ENCODE measurements at regions of chr7 and their contacts with region 1.

Region 1: DNA sequence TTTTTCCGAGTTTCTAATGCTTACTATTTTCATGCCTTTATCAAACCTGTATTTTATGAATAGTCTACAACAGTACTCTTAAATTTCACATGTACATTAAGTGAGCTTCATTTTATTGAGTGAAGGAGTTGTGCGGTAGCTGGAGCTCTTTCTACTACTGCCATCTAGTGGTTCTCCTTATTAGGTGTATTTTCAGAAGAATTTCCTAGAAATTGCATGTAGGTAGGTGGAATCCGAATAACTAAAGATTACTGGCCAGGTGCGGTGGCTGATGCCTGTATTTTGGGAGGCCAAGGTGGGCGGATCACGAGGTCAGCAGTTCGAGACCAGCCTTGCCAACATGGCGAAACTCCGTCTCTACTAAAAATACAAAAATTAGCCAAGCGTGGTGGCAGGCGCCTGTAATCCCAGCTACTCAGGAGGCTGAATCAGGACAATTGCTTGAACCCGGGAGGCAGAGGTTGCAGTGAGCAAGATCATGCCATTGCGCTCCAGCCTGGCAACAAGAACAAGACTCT is 38.3 kb downstream of the LRRC72 start:
- DNase-seq: peak; percentile 52
- H3K4me3 ChIP-seq: no peak overlapping the region
- H3K27ac ChIP-seq: no peak overlapping the region
- H3K4me1 ChIP-seq: no peaks in the 10 kb centered on the region
- CTCF ChIP-seq: peak; percentile 87

Region 2: DNA sequence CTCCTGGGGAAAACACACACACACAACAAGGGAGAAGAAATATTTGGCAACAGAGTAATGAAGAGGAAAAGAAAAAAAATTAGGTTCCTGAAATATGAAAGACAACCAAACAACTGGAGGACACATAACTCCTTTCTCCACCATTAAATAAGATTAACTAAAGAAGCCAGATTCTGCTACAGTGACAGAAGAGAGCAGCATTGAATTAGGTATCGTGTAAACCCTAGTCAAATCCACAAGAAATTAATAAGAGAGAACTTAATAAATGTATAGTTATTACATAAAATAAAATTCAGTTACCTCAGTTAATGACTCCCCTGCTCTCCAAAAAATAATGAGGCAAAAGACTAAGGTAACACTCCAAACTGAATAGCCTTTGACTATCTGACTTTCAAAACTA is 450.3 kb before region 1 on chr7:
- CTCF ChIA-PET with region 1: no interaction called
- POLR2A ChIA-PET with region 1: no interaction called
- intact Hi-C with region 1: loop called (anchors 10 kb)
- DNase-seq: no peak
- H3K4me3 ChIP-seq: no peak overlapping the region
- H3K27ac ChIP-seq: no peak overlapping the region
- H3K4me1 ChIP-seq: no peaks in the 10 kb centered on the region
- CTCF ChIP-seq: peak; percentile 49

Region 3: GRCh38 chr7:16431646-16432424 is 133.1 kb before region 1 on chr7:
- CTCF ChIA-PET with region 1: no interaction called
- POLR2A ChIA-PET with region 1: no interaction called
- intact Hi-C with region 1: loop called (anchors 2 kb)
- DNase-seq: peak; percentile 27
- H3K4me3 ChIP-seq: no peak overlapping the region
- H3K27ac ChIP-seq: no peak overlapping the region
- H3K4me1 ChIP-seq: no peaks in the 10 kb centered on the region
- CTCF ChIP-seq: peak; percentile 69

Measured in OCI-LY7 (cell line).